ENCODE measurements at regions of chr12 and their contacts with region 1.

Region 1: GRCh38 chr12:53625946-53626701 is at the start of gene ATF7:
- DNase-seq: peak; percentile 98
- ATAC-seq: peak; percentile 91
- H3K4me3 Mint-ChIP-seq: peak within 1 kb of the TSS; percentile 98
- H3K27ac Mint-ChIP-seq: peak within 1 kb of the TSS; percentile 99
- H3K4me1 Mint-ChIP-seq: peaks cover 43% of the 10 kb centered on the region
- H3K27me3 Mint-ChIP-seq: no peaks in the 10 kb centered on the region
- CTCF ChIP-seq: no peak
- total RNA-seq, gene ATF7: 29.5 and 36.8 TPM in 2 replicates

Region 2: GRCh38 chr12:53451661-53452158 is 174.4 kb before region 1 on chr12 and contains the start of gene PCBP2:
- CTCF ChIA-PET with region 1: no interaction called
- POLR2A ChIA-PET with region 1: no interaction called
- intact Hi-C with region 1: loop called (anchors 1 kb)
- DNase-seq: peak; percentile 92
- ATAC-seq: peak; percentile 92
- H3K4me3 Mint-ChIP-seq: peak within 1 kb of the TSS; percentile 99
- H3K27ac Mint-ChIP-seq: peak within 1 kb of the TSS; percentile 99
- H3K4me1 Mint-ChIP-seq: peaks cover 30% of the 10 kb centered on the region
- H3K27me3 Mint-ChIP-seq: no peaks in the 10 kb centered on the region
- CTCF ChIP-seq: no peak
- total RNA-seq, gene PCBP2: 841 and 853 TPM in 2 replicates

Region 3: GRCh38 chr12:53579545-53579955 is 46.6 kb before region 1 on chr12:
- CTCF ChIA-PET with region 1: no interaction called
- POLR2A ChIA-PET with region 1: interaction called, 11 read pairs
- intact Hi-C with region 1: no loop called
- DNase-seq: no peak
- ATAC-seq: peak; percentile 67
- H3K4me3 Mint-ChIP-seq: no peak overlapping the region
- H3K27ac Mint-ChIP-seq: peak overlapping the region; percentile 16
- H3K4me1 Mint-ChIP-seq: peaks cover 26% of the 10 kb centered on the region
- H3K27me3 Mint-ChIP-seq: no peaks in the 10 kb centered on the region
- CTCF ChIP-seq: no peak

Region 4: DNA sequence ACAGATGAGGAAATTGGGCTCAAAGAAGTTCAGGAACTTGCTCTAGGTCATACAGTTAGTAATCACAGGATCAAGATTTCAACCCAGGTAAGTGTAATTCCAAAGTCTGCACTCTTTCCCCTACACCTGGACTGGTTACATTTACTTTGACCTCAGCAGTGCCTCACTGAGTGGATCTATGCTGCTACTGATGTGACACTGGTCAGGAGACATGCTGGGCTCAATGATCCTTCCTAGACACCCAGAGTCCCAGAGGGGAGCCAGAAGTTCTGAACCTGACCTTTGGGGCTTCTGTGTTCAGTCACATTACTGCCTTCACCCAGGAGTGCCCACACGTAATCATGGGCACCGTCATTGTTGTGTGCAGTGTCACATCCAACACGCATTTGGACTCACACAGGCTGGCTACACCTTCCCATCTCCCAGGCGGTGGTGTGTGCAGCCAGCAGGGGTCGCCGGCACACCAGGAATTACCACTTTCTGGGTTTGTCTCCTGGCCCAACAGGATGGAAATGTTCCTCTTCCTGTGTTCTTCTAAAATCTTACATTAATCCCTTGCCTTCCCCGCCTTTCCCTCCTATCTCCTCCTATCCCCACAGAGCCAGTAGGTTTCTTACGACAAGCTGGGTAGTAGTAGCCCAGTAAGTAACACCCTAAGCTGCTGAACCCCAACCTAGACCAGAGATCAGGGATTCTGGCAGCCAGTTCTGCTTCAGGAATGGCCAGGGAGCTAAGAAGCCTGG is 75.6 kb after region 1 on chr12:
- CTCF ChIA-PET with region 1: no interaction called
- POLR2A ChIA-PET with region 1: no interaction called
- intact Hi-C with region 1: no loop called
- DNase-seq: peak; percentile 56
- ATAC-seq: peak; percentile 85
- H3K4me3 Mint-ChIP-seq: no peak overlapping the region
- H3K27ac Mint-ChIP-seq: no peak overlapping the region
- H3K4me1 Mint-ChIP-seq: peaks cover 4% of the 10 kb centered on the region
- H3K27me3 Mint-ChIP-seq: peaks cover 71% of the 10 kb centered on the region
- CTCF ChIP-seq: peak; percentile 65